PC-3 (cell line): ENCODE measurements at regions of chr12 and their contacts with region 1.

Region 1: DNA sequence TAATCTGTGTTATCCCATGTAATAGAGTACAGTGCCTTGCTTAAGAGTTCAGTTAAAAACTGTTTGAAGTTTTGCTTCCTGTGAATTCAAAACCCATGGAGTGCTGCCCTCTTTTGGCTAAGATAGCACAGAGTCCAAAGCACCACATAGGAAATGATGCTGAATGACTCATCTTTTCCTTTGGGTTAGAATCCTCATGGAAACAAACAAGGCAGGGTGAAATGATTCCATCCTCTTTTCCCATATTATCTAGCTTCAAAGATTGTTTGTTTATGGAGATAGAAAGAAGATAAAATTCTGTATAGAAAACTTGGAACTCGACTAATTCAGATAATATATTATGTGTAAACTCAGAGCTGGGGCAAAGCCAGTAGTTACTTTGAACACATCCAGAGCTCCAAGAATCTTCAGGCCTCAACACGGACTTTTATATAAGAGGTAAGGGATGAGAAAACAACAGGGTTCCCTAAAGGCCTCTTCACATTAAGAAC is 87.4 kb downstream of the OTOGL start:
- DNase-seq: peak; percentile 93
- ATAC-seq: peak; percentile 89
- H3K4me3 ChIP-seq: no peak overlapping the region
- H3K27ac ChIP-seq: peak overlapping the region; percentile 53
- H3K4me1 ChIP-seq: peaks cover 18% of the 10 kb centered on the region
- H3K27me3 ChIP-seq: no peaks in the 10 kb centered on the region
- CTCF ChIP-seq: peak; percentile 94

Region 2: DNA sequence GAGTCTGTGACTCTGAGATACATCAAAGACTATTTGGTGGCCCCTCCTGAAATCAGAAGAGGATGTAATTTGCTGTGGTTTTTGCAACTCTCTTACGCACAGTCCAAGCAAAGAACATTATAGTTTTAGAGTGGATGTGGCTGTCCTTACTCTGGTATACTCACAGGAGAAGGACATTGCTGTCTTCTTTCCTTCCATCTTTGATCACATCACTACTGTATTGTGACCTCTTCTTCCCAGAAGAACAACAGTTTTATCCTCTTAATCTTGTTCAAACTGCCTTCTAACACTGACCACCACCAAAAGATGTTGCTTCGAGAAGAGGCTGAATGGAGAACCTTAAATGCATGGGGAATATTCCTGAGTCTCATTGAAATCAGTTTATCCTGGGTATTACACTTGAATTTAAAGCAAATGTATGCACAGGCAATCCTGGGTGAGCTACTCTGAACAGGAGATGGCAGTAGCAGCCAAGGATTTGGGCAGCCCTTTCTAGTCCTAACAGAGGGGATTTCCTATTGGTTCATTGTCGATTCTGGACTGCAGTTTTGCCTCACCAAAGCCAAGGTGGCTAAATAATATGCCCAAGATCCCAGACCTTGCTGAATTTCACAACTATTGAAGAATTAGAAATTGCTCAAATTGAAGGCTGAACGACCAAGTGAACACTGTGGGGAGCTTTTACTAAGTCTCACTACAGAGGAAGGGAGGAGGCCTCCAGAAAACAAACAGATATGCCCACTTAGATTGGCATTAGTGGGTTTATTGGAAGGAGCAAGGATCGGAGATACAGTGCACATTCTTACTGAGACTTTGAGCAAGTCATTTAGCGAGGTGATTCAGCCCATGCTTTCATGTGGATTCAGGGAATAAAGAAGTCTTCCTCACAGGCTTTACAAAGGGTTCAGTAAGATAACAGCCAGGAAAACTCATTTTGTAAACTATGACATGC is 778.8 kb before region 1 on chr12:
- CTCF ChIA-PET with region 1: no interaction called
- POLR2A ChIA-PET with region 1: no interaction called
- intact Hi-C with region 1: loop called (anchors 1 kb)
- DNase-seq: peak; percentile 94
- ATAC-seq: peak; percentile 99
- H3K4me3 ChIP-seq: peak overlapping the region; percentile 24; the same call in 1 of the 2 replicates
- H3K27ac ChIP-seq: peak overlapping the region; percentile 33
- H3K4me1 ChIP-seq: peaks cover 23% of the 10 kb centered on the region
- H3K27me3 ChIP-seq: no peaks in the 10 kb centered on the region
- CTCF ChIP-seq: peak; percentile 97

Region 3: DNA sequence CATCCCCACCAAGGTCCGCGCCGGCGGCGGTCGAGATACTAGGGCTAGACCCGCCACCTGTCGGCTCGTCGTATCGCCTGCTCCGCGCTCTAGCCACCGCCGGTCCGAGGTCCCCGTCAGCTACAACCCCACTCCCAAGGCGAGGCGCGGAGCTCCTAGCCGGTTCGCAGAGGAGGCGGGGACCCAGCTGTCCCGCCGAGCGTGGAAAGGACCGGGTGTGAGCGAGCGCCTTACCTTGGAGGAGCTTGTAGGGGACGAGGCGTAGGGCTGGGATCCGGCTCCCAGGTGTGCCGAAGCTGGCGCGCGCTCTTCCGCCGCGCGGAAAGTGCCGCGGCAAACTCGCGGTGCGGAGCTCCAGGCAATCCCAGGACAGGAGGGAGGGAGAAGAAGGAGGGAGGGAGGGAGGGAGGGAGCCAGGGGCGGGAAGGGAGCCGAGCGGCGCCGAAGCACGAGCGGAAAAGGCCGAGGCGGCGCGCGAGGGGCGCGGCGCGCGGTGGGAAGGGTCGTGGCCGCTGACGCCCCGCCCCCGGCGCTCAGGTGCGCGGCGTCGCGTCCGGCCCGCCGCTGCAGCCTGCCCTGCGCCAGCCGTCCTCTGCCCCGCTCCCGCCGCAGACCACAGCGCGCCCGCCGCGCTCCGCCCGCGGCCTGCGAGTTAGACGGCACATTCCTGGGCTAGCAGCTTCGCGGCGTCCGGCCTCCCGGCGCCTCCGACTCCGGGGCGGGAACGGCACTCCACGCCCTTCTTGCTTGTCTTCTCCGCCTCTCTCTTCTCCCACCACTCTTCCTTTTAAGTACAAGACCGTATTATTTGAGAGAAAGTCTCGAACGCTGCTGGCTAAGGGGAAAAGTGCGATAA is 495.9 kb before region 1 on chr12 and contains the start of gene PAWR:
- CTCF ChIA-PET with region 1: interaction called, 3 read pairs
- POLR2A ChIA-PET with region 1: no interaction called
- intact Hi-C with region 1: loop called (anchors 5 kb)
- DNase-seq: peak; percentile 92
- ATAC-seq: peak; percentile 62
- H3K4me3 ChIP-seq: peak within 1 kb of the TSS; percentile 87
- H3K27ac ChIP-seq: peak within 1 kb of the TSS; percentile 82
- H3K4me1 ChIP-seq: peaks cover 38% of the 10 kb centered on the region
- H3K27me3 ChIP-seq: no peaks in the 10 kb centered on the region
- CTCF ChIP-seq: no peak; the same call in 1 of the 2 replicates
- total RNA-seq, gene PAWR: 141 and 214 TPM in 2 replicates

Region 4: GRCh38 chr12:79763766-79764452 is 422.9 kb before region 1 on chr12:
- CTCF ChIA-PET with region 1: no interaction called
- POLR2A ChIA-PET with region 1: no interaction called
- intact Hi-C with region 1: loop called (anchors 5 kb)
- DNase-seq: no peak
- ATAC-seq: no peak
- H3K4me3 ChIP-seq: no peak overlapping the region
- H3K27ac ChIP-seq: no peak overlapping the region
- H3K4me1 ChIP-seq: no peaks in the 10 kb centered on the region
- H3K27me3 ChIP-seq: no peaks in the 10 kb centered on the region
- CTCF ChIP-seq: no peak

Region 5: DNA sequence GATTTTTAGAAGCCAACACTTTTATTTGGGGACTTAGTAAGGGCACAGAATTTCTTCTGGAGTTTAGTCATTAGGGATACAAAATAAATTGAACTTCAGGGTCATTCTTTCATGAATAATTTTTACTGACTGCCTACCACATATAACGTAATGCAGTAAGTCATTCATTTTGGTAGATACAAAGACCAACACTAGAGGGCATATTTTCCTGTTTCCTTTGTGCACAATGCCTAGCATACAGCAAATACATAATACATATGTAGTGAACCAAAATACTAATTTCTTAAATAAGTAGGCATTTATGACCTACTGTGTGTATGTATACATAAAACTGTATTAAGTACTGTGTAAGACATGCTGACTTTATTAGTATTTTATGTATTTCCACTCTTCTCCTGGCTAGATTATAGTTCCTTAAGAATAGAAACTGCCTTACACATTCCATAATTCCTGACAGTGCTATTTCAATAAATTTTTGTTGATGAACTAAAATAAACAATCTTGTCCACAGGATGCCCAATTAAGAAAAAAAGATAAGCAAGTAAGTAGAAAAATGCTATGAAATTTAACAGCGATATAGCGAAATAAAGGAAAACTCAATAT is 299.8 kb before region 1 on chr12:
- CTCF ChIA-PET with region 1: no interaction called
- POLR2A ChIA-PET with region 1: no interaction called
- intact Hi-C with region 1: loop called (anchors 1 kb)
- DNase-seq: peak; percentile 84
- ATAC-seq: peak; percentile 78
- H3K4me3 ChIP-seq: no peak overlapping the region
- H3K27ac ChIP-seq: no peak overlapping the region
- H3K4me1 ChIP-seq: peaks cover 12% of the 10 kb centered on the region
- H3K27me3 ChIP-seq: no peaks in the 10 kb centered on the region
- CTCF ChIP-seq: peak; percentile 87

Region 6: DNA sequence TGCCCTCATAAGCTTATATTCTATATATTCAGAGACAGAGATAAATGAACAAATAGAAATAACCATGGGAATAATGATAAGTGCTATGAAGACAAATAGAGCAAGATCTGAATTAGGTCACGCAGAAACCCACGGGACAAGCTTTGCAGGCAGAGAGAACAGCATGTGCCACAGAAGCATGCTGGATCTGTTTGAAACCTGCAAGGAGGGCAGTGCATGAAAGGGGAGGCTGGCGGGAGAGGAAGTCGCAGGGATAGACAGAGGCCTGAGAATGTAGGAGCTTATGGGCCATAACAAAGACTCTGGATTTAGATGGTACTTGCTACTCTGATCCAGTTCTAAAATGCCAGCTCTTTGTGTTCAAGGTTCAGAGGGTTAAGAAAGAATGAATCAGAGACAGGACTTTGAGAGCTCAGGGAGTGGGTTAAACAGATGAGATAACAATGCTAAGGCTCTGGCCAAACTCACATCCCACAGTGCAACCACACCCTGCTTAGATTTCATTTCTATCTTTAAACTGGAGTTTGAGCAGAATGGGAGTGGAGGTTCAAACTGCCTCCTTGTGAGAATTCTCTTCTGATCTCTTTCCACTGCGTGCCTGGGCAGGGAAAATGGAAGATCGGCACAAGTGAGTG is 202.7 kb before region 1 on chr12:
- CTCF ChIA-PET with region 1: no interaction called
- POLR2A ChIA-PET with region 1: no interaction called
- intact Hi-C with region 1: loop called (anchors 5 kb)
- DNase-seq: peak; percentile 70
- ATAC-seq: peak; percentile 55
- H3K4me3 ChIP-seq: no peak overlapping the region
- H3K27ac ChIP-seq: peak overlapping the region; percentile 70
- H3K4me1 ChIP-seq: peaks cover 37% of the 10 kb centered on the region
- H3K27me3 ChIP-seq: no peaks in the 10 kb centered on the region
- CTCF ChIP-seq: no peak

Region 7: DNA sequence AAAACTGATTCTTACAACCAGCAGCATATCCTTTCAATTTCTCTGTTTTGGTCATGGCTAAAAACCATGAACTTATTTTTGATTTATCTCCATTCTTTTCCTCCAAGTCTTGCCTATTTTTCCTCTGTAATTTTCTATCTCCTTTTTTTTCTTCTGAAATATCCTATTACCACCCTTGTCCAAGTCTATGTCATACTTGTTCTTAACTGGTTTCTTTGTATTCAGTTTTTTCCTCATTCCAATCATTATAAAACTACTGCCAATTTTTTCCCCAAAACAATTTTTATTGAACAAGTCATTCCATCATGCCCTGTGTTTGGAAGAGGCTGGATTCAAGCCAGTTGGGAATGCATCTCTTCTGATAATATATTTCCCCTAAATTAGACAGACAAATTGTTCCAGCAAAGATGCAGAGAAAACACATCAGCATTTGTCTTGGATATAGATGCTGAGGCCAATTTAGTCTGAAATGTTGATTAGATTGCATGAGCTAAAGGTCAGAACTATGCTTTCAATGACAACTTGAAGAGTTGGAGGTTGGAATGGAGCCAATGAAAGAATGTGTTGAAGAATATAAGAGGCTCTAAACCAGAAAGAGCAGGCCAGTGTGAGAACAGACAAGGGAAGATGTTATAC is 56.8 kb before region 1 on chr12:
- CTCF ChIA-PET with region 1: no interaction called
- POLR2A ChIA-PET with region 1: no interaction called
- intact Hi-C with region 1: no loop called
- DNase-seq: peak; percentile 9
- ATAC-seq: no peak
- H3K4me3 ChIP-seq: no peak overlapping the region
- H3K27ac ChIP-seq: no peak overlapping the region
- H3K4me1 ChIP-seq: no peaks in the 10 kb centered on the region
- H3K27me3 ChIP-seq: no peaks in the 10 kb centered on the region
- CTCF ChIP-seq: no peak